Activated CD4-positive, alpha-beta memory T cell treated with anti-CD3 and anti-CD28 coated beads for 36 hours (primary cell): ENCODE measurements at regions of chr9 and their contacts with region 1.

Region 1: DNA sequence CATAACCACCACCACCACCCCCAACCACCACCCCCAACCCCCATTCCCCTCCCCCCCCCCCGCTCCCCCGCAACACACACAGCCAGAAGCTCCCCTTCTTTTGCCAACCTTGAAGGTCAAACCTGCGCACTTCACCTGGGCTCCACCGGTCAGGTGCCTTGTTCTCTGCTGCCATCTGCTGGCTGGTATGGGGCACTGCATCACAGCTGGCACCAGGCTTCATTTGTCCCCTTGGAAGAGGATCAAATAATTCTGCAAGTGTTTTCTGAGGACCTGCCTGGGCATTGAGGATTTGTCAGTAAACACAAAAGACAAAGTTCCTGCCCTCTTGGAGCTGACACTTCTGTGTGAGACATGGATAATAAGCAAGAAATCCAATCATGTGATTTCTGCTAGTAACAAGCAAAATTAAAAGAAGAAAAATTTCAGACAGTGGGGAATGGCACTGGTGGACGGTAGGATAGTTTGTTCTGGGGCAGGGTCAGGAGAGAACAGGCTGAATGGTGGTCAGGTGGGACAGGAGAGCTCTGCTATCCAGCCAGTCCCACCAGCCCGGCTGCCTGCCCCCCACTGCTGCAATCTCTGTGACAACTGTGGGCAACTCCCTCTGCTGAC is 55.6 kb upstream of the LMX1B start:
- DNase-seq: peak; percentile 78
- H3K4me3 Mint-ChIP-seq: no peak overlapping the region
- H3K27ac Mint-ChIP-seq: no peak overlapping the region
- H3K4me1 Mint-ChIP-seq: no peaks in the 10 kb centered on the region
- H3K27me3 Mint-ChIP-seq: peaks cover 32% of the 10 kb centered on the region

Region 2: GRCh38 chr9:126500684-126501382 is 57.3 kb before region 1 on chr9:
- CTCF ChIA-PET with region 1: interaction called, 401 read pairs
- POLR2A ChIA-PET with region 1: no interaction called
- intact Hi-C with region 1: loop called (anchors 1 kb)
- DNase-seq: peak; percentile 79
- H3K4me3 Mint-ChIP-seq: no peak overlapping the region
- H3K27ac Mint-ChIP-seq: no peak overlapping the region
- H3K4me1 Mint-ChIP-seq: peaks cover 5% of the 10 kb centered on the region
- H3K27me3 Mint-ChIP-seq: peaks cover 9% of the 10 kb centered on the region

Region 3: DNA sequence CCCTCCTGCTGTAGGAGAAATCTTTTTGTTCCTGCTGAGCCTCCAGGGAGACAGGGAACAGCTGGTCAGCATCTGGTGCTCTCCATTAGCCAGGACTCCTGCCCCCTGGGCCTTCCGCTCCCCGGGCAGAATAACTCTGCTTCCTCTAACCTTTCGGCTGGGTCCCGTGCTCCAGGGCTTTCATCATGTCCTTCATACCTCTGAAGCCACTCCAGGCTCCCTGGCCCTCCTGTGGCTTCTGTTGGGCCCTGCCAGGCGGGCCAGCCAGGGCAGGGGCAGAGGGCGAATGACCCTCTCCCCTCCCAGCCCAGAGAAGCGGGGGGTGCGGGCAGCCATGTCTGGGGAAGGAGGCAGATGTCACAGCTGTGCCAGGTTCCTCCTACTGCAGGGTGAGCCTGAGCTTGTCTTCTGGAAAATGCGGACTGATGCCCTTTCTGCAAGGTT is 26.1 kb before region 1 on chr9:
- CTCF ChIA-PET with region 1: interaction called, 20 read pairs
- POLR2A ChIA-PET with region 1: no interaction called
- intact Hi-C with region 1: no loop called
- DNase-seq: no peak
- H3K4me3 Mint-ChIP-seq: no peak overlapping the region
- H3K27ac Mint-ChIP-seq: no peak overlapping the region
- H3K4me1 Mint-ChIP-seq: no peaks in the 10 kb centered on the region
- H3K27me3 Mint-ChIP-seq: peaks cover 4% of the 10 kb centered on the region

Region 4: GRCh38 chr9:126545106-126545505 is 13.1 kb before region 1 on chr9:
- CTCF ChIA-PET with region 1: interaction called, 11 read pairs
- POLR2A ChIA-PET with region 1: no interaction called
- intact Hi-C with region 1: no loop called
- DNase-seq: no peak
- H3K4me3 Mint-ChIP-seq: no peak overlapping the region
- H3K27ac Mint-ChIP-seq: no peak overlapping the region
- H3K4me1 Mint-ChIP-seq: no peaks in the 10 kb centered on the region
- H3K27me3 Mint-ChIP-seq: peaks cover 3% of the 10 kb centered on the region

Region 5: DNA sequence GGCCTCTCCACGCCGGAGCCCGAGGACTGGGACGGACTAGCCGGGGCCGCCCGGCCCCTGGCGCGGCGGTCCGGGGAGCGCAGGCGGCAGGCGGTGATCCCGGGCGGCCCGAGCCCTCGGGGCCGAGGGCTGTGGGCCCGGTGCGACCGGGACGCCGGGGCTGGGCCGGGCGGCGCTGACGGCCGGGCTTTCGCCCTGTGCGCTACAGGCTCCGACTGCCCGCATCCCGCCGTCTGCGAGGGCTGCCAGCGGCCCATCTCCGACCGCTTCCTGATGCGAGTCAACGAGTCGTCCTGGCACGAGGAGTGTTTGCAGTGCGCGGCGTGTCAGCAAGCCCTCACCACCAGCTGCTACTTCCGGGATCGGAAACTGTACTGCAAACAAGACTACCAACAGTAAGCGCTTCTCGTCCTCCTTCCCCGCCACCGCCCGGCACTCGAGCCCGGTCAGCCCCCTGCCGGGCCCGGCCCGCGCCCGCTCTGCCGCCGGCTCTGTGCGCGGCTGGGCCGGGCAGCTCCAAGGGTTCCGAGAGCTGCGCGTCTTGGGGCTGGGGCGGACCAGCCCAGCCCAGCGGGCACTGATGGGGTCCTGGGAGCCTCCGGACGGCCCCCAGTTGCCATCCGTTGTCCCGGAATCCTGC is 57.1 kb after region 1 on chr9:
- CTCF ChIA-PET with region 1: no interaction called
- POLR2A ChIA-PET with region 1: no interaction called
- intact Hi-C with region 1: no loop called
- DNase-seq: peak; percentile 44
- H3K4me3 Mint-ChIP-seq: no peak overlapping the region
- H3K27ac Mint-ChIP-seq: no peak overlapping the region
- H3K4me1 Mint-ChIP-seq: peaks cover 30% of the 10 kb centered on the region
- H3K27me3 Mint-ChIP-seq: peaks cover 68% of the 10 kb centered on the region